ENCODE measurements at regions of chr3 and their contacts with region 1.

Region 1: GRCh38 chr3:134308350-134308891 is 57.8 kb upstream of the RYK start:
- DNase-seq: peak; percentile 46
- ATAC-seq: peak; percentile 84
- H3K4me3 Mint-ChIP-seq: no peak overlapping the region
- H3K27ac Mint-ChIP-seq: no peak overlapping the region
- H3K4me1 Mint-ChIP-seq: peaks cover 4% of the 10 kb centered on the region
- H3K27me3 Mint-ChIP-seq: peaks cover 29% of the 10 kb centered on the region
- CTCF ChIP-seq: no peak

Region 2: GRCh38 chr3:133113526-133113925 is 1194.9 kb before region 1 on chr3:
- CTCF ChIA-PET with region 1: no interaction called
- POLR2A ChIA-PET with region 1: no interaction called
- intact Hi-C with region 1: no loop called
- DNase-seq: no peak
- ATAC-seq: no peak
- H3K4me3 Mint-ChIP-seq: no peak overlapping the region
- H3K27ac Mint-ChIP-seq: no peak overlapping the region
- H3K4me1 Mint-ChIP-seq: no peaks in the 10 kb centered on the region
- H3K27me3 Mint-ChIP-seq: no peaks in the 10 kb centered on the region
- CTCF ChIP-seq: no peak

Region 3: GRCh38 chr3:134473868-134474546 is 165.6 kb after region 1 on chr3:
- CTCF ChIA-PET with region 1: interaction called, 21 read pairs
- POLR2A ChIA-PET with region 1: interaction called, 3 read pairs
- intact Hi-C with region 1: loop called (anchors 1 kb)
- DNase-seq: peak; percentile 32
- ATAC-seq: peak; percentile 54
- H3K4me3 Mint-ChIP-seq: no peak overlapping the region
- H3K27ac Mint-ChIP-seq: no peak overlapping the region
- H3K4me1 Mint-ChIP-seq: peaks cover 2% of the 10 kb centered on the region
- H3K27me3 Mint-ChIP-seq: no peaks in the 10 kb centered on the region
- CTCF ChIP-seq: peak; percentile 39

Region 4: DNA sequence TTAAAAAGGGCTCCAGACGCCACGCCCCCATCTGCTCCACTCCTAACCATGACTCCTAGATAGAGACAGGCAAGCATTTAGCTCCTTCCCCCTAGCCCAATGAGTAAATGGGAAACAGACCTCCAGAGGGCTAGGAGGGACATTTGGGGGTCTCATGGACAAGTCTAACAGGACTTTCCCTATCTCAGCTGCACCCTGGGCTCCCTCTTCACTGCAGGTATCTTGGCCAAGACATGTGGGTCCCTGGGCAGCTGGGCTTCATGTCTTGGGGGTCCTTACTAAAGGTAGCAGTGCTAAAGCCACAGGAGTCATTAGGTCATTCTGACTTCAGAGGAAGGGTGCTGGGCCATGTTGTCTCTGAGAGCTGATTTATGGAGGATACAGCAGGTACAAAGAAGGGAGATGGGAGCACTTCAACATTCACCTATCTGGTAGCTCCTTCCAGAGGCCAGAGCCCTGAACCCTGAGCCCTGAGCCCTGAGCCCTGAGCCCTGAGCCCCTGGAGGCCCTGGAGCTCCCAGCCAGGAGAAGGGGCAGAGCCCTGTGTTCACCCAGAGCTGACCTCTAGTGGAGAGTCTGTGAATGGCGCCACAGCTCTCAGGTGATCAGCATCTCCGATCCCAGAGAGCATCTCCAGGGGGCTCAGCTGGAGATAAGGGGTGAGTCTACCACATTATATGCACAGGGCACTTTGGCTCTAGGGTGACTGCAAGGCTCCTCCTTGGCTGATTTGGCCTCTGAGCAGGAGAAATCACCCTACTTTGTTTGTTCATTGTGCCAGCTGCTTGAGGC is 446.5 kb after region 1 on chr3:
- CTCF ChIA-PET with region 1: no interaction called
- POLR2A ChIA-PET with region 1: no interaction called
- intact Hi-C with region 1: loop called (anchors 5 kb)
- DNase-seq: no peak
- ATAC-seq: no peak
- H3K4me3 Mint-ChIP-seq: no peak overlapping the region
- H3K27ac Mint-ChIP-seq: no peak overlapping the region
- H3K4me1 Mint-ChIP-seq: no peaks in the 10 kb centered on the region
- H3K27me3 Mint-ChIP-seq: peaks cover 7% of the 10 kb centered on the region
- CTCF ChIP-seq: no peak

Region 5: GRCh38 chr3:135895106-135895733 is 1586.8 kb after region 1 on chr3:
- CTCF ChIA-PET with region 1: no interaction called
- POLR2A ChIA-PET with region 1: no interaction called
- intact Hi-C with region 1: loop called (anchors 5 kb)
- DNase-seq: peak; percentile 20
- ATAC-seq: no peak
- H3K4me3 Mint-ChIP-seq: no peak overlapping the region
- H3K27ac Mint-ChIP-seq: no peak overlapping the region
- H3K4me1 Mint-ChIP-seq: no peaks in the 10 kb centered on the region
- H3K27me3 Mint-ChIP-seq: no peaks in the 10 kb centered on the region
- CTCF ChIP-seq: peak; percentile 58